CD4-positive, alpha-beta memory T cell (primary cell): ENCODE measurements at regions of chr2 and their contacts with region 1.

Region 1: GRCh38 chr2:201257956-201258665 is 2.2 kb upstream of the CASP8 start:
- DNase-seq: peak; percentile 95 to 99 (median 98)
- H3K4me3 ChIP-seq: peak overlapping the region; percentile 57 to 58
- H3K4me3 Mint-ChIP-seq: peak overlapping the region; percentile 89 to 93 (median 92)
- H3K27ac ChIP-seq: peak overlapping the region; percentile 86
- H3K27ac Mint-ChIP-seq: peak overlapping the region; percentile 95 to 100 (median 99)
- H3K4me1 ChIP-seq: peaks cover 79% of the 10 kb centered on the region
- H3K4me1 Mint-ChIP-seq: peaks cover 40 to 81% (median 61%) of the 10 kb centered on the region in 4 donors
- H3K27me3 ChIP-seq: no peaks in the 10 kb centered on the region
- H3K27me3 Mint-ChIP-seq: no peaks in the 10 kb centered on the region

Region 2: GRCh38 chr2:201182650-201183364 is 75.3 kb before region 1 on chr2 and contains the start of gene CASP10:
- CTCF ChIA-PET with region 1: interaction called, 6 read pairs
- POLR2A ChIA-PET with region 1: interaction called, 7 read pairs
- intact Hi-C with region 1: loop called (anchors 1 kb)
- DNase-seq: peak; percentile 62 to 81 (median 76)
- H3K4me3 ChIP-seq: peak within 1 kb of the TSS; percentile 54 to 87
- H3K4me3 Mint-ChIP-seq: peak within 1 kb of the TSS; percentile 90 to 99 (median 96)
- H3K27ac ChIP-seq: peak within 1 kb of the TSS; percentile 75
- H3K27ac Mint-ChIP-seq: peak within 1 kb of the TSS; percentile 92 to 98 (median 96)
- H3K4me1 ChIP-seq: peaks cover 37% of the 10 kb centered on the region
- H3K4me1 Mint-ChIP-seq: peaks cover 28 to 54% (median 40%) of the 10 kb centered on the region in 4 donors
- H3K27me3 ChIP-seq: no peaks in the 10 kb centered on the region
- H3K27me3 Mint-ChIP-seq: no peaks in the 10 kb centered on the region
- total RNA-seq, gene CASP10: 30.6 to 36.6 TPM

Region 3: DNA sequence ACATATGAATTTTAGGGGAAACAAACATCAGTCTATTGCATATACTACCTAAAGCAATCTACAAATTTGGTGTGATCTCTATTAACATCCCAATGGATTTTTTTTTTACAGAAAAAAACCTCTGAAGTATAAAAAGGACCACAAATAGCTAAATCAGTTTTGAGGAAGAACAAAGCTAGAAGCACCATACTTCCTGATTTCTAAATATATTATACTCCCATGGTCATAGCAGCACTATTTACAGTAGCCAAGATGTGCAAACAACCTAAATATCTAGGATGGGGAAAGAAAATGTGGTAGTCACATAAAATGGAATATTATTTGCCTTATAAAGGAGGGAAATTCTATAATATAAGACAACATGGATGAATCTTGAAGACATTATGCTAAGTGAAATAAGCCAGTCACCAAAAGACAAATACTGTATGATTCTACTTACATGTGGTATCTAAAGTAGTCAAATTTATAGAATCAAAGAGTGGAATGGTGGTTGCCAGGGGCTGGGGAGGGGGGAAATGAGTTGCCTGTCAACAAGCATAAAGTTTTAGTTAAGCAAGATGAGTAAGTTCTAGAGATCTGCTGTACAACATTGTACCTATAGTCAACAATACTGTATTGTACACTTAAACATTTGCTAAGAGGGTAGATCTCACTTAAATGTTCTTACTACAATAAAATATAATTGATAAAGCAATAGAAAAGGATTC is 15.4 kb before region 1 on chr2:
- CTCF ChIA-PET with region 1: interaction called, 72 read pairs
- POLR2A ChIA-PET with region 1: interaction called, 52 read pairs
- intact Hi-C with region 1: no loop called
- DNase-seq: no peak
- H3K4me3 ChIP-seq: no peak overlapping the region
- H3K4me3 Mint-ChIP-seq: no peak overlapping the region
- H3K27ac ChIP-seq: no peak overlapping the region
- H3K27ac Mint-ChIP-seq: peak overlapping the region in 5 of 7 donors; percentile 28 to 71 (median 58)
- H3K4me1 ChIP-seq: peaks cover 42% of the 10 kb centered on the region
- H3K4me1 Mint-ChIP-seq: peaks cover 36 to 73% (median 54%) of the 10 kb centered on the region in 4 donors
- H3K27me3 ChIP-seq: no peaks in the 10 kb centered on the region
- H3K27me3 Mint-ChIP-seq: no peaks in the 10 kb centered on the region

Region 4: DNA sequence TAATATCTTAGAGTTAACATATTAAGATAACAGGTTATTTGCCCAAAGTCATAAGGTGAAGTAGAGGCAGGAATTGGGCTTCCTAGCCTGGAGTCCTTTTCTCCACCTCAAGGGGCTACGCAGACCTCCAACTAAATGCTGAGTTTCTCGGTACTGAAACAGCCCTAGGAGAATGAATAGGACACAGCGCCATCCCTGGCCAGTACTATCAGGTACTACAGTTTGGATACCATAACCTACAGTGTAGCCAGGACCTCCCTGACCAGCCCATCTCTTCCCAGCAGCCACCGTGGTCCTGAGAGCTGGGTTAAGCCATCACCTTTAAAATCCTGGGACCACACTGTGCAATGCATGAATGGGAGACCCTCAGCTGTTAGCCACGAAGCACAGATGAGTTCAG is 17.9 kb after region 1 on chr2:
- CTCF ChIA-PET with region 1: interaction called, 13 read pairs
- POLR2A ChIA-PET with region 1: interaction called, 76 read pairs
- intact Hi-C with region 1: loop called (anchors 1 kb)
- DNase-seq: no peak
- H3K4me3 ChIP-seq: no peak overlapping the region
- H3K4me3 Mint-ChIP-seq: no peak overlapping the region
- H3K27ac ChIP-seq: no peak overlapping the region
- H3K27ac Mint-ChIP-seq: peak overlapping the region in 5 of 7 donors; percentile 28 to 84 (median 63)
- H3K4me1 ChIP-seq: peaks cover 34% of the 10 kb centered on the region
- H3K4me1 Mint-ChIP-seq: peaks cover 36 to 65% (median 46%) of the 10 kb centered on the region in 4 donors
- H3K27me3 ChIP-seq: no peaks in the 10 kb centered on the region
- H3K27me3 Mint-ChIP-seq: no peaks in the 10 kb centered on the region

Region 5: DNA sequence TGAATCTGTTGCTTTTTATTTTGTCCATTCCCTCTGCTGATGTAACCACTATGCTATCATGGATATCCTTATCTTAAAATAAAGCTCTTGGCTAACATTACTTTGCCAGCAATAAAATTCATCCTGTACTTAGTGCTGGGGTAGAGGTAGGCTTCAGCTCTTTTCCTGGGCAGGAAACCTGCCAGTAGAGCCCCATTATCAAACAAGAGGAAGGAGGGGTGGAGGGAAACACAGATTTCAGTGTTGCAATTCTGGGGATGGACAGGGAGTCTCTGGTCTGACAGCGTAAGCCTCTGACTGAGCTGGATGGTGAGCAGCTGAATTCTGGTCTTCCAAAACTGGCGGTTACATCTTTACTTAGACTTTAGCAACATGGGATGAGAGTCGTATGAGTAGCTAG is 49.8 kb after region 1 on chr2:
- CTCF ChIA-PET with region 1: no interaction called
- POLR2A ChIA-PET with region 1: no interaction called
- intact Hi-C with region 1: no loop called
- DNase-seq: no peak
- H3K4me3 ChIP-seq: no peak overlapping the region
- H3K4me3 Mint-ChIP-seq: no peak overlapping the region
- H3K27ac ChIP-seq: no peak overlapping the region
- H3K27ac Mint-ChIP-seq: no peak overlapping the region
- H3K4me1 ChIP-seq: no peaks in the 10 kb centered on the region
- H3K4me1 Mint-ChIP-seq: no peaks in the 10 kb centered on the region
- H3K27me3 ChIP-seq: no peaks in the 10 kb centered on the region
- H3K27me3 Mint-ChIP-seq: no peaks in the 10 kb centered on the region

Region 6: GRCh38 chr2:201451292-201452057 is 193.4 kb after region 1 on chr2 and contains the starts of genes STRADB and TRAK2:
- CTCF ChIA-PET with region 1: interaction called, 3 read pairs
- POLR2A ChIA-PET with region 1: interaction called, 27 read pairs
- intact Hi-C with region 1: loop called (anchors 1 kb)
- DNase-seq: peak; percentile 93 to 98 (median 95)
- H3K4me3 ChIP-seq: peak within 1 kb of the TSS; percentile 38 to 93
- H3K4me3 Mint-ChIP-seq: peak within 1 kb of the TSS; percentile 94 to 99 (median 98)
- H3K27ac ChIP-seq: peak within 1 kb of the TSS; percentile 74
- H3K27ac Mint-ChIP-seq: peak within 1 kb of the TSS; percentile 95 to 98 (median 97)
- H3K4me1 ChIP-seq: peaks cover 49% of the 10 kb centered on the region
- H3K4me1 Mint-ChIP-seq: peaks cover 29 to 52% (median 41%) of the 10 kb centered on the region in 4 donors
- H3K27me3 ChIP-seq: no peaks in the 10 kb centered on the region
- H3K27me3 Mint-ChIP-seq: no peaks in the 10 kb centered on the region
- total RNA-seq, gene STRADB: 17.3 to 20.9 TPM
- total RNA-seq, gene TRAK2: 46.8 to 47.3 TPM

Region 7: GRCh38 chr2:202033321-202034248 is 775.5 kb after region 1 on chr2 and contains the start of gene FZD7:
- CTCF ChIA-PET with region 1: no interaction called
- POLR2A ChIA-PET with region 1: no interaction called
- intact Hi-C with region 1: loop called (anchors 5 kb)
- DNase-seq: peak; percentile 80 to 86 (median 82)
- H3K4me3 ChIP-seq: peak within 1 kb of the TSS; percentile 67 to 91
- H3K4me3 Mint-ChIP-seq: peak within 1 kb of the TSS; percentile 91 to 96 (median 93)
- H3K27ac ChIP-seq: peak within 1 kb of the TSS; percentile 15
- H3K27ac Mint-ChIP-seq: peak within 1 kb of the TSS; percentile 79 to 91 (median 84)
- H3K4me1 ChIP-seq: peaks cover 21% of the 10 kb centered on the region
- H3K4me1 Mint-ChIP-seq: peaks cover 8 to 15% (median 10%) of the 10 kb centered on the region in 4 donors
- H3K27me3 ChIP-seq: peaks cover 27% of the 10 kb centered on the region
- H3K27me3 Mint-ChIP-seq: peaks cover 6 to 7% of the 10 kb centered on the region in 2 donors
- total RNA-seq, gene FZD7: 0.47 to 0.61 TPM